Adrenal gland (tissue), 19 donors: ENCODE measurements at regions of chr4 and their contacts with region 1.

Region 1: DNA sequence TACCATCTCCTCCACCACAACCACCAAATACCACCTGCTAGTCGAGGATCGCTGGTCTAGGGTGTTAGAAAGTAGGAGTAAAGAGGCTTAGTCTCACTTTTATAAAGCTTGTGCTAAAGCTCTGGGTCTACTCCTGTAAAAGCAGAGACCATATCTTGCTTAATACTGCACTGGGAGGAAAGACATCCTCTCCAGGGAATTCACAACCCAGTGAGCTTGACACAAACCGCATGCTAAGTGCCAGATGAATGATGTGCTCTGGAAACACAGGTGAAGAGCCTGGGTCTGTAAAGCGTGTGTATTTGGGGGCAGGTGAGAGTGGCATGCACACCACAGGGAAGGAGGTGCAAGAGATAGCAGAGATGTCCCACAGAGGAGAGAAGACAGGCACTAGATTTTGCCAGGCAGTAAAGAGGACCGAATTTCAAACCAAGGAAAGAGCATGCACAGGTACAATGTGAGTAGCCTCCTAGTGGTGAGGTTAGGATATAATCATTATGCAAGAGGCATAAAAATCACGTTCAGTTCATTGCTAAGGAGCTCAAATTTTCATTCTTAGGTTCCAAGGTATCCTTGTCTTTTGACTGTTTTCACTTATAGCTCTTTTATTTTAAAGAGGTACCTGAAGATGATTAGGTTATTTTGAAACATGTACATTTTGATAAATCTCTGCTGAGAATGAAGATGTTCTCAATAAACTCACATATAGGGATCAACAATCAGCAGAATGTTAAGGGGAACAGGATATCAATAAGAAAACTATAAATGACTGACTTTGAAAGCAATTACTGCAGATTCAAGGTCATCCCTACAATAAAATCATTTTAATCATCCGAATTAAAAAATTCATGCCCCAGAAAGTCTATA is 20.7 kb downstream of the TAPT1 start:
- DNase-seq: no peak
- H3K4me3 ChIP-seq: no peak overlapping the region
- H3K27ac ChIP-seq: no peak overlapping the region
- H3K4me1 ChIP-seq: peaks cover 12 to 49% of the 10 kb centered on the region in 2 donors
- H3K27me3 ChIP-seq: no peaks in the 10 kb centered on the region
- CTCF ChIP-seq: peak; percentile 41 to 66 (median 53)
- POLR2A ChIP-seq: no peak

Region 2: GRCh38 chr4:15982842-15983524 is 222.5 kb before region 1 on chr4:
- intact Hi-C with region 1: no loop called
- DNase-seq: no peak
- H3K4me3 ChIP-seq: no peak overlapping the region
- H3K27ac ChIP-seq: no peak overlapping the region
- H3K4me1 ChIP-seq: no peaks in the 10 kb centered on the region
- H3K27me3 ChIP-seq: no peaks in the 10 kb centered on the region
- CTCF ChIP-seq: no peak
- POLR2A ChIP-seq: no peak

Region 3: DNA sequence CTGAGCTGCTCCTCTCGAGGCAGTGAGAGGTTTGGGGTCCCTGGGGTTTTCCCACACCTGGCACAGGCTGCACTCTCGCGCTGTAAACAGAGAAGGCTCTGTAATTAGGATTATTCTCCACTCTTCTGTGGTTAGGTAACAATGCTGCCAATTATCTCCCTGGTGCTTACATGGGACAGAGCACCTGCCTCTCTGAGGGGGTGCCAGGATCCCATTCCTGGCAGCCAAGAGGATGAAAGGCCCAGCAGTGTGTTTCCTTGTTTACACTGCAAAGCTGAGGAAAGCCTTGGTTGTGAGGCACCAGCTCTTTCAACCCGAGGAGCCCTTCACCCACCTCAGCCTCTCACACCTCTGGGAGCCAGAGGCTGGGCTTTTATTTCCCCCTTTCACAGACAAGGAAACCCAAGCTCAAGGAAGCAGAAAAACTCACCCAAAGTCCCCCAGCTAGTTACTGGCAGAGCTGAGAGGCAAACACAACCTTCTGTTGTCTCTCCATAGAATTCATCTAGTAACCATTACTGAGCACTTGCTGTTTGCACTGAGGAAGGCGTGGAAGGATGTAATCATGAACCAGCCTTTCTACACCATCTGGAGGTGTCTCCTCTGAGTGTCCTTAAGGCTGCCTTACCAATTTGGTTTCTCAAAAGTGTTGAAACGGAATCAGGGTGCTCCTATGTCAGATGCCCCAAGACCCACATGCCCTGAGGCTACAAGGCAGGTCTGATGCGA is 82.0 kb before region 1 on chr4:
- intact Hi-C with region 1: no loop called
- DNase-seq: no peak
- H3K4me3 ChIP-seq: no peak overlapping the region
- H3K27ac ChIP-seq: no peak overlapping the region
- H3K4me1 ChIP-seq: no peaks in the 10 kb centered on the region
- H3K27me3 ChIP-seq: no peaks in the 10 kb centered on the region
- CTCF ChIP-seq: no peak
- POLR2A ChIP-seq: no peak

Region 4: GRCh38 chr4:16150716-16151115 is 54.8 kb before region 1 on chr4:
- intact Hi-C with region 1: no loop called
- DNase-seq: no peak
- H3K4me3 ChIP-seq: no peak overlapping the region
- H3K27ac ChIP-seq: no peak overlapping the region
- H3K4me1 ChIP-seq: no peaks in the 10 kb centered on the region
- H3K27me3 ChIP-seq: no peaks in the 10 kb centered on the region
- CTCF ChIP-seq: no peak
- POLR2A ChIP-seq: no peak

Region 5: GRCh38 chr4:16264798-16265197 is 59.3 kb after region 1 on chr4:
- intact Hi-C with region 1: loop called in 1 of 2 experiments (anchors 10 kb)
- DNase-seq: peak in 1 of 7 donors; percentile 12
- H3K4me3 ChIP-seq: no peak overlapping the region
- H3K27ac ChIP-seq: no peak overlapping the region
- H3K4me1 ChIP-seq: peaks cover 0 to 4% of the 10 kb centered on the region in 2 donors
- H3K27me3 ChIP-seq: no peaks in the 10 kb centered on the region
- CTCF ChIP-seq: peak; percentile 32 to 83 (median 72)
- POLR2A ChIP-seq: no peak

Region 6: GRCh38 chr4:16431866-16432265 is 226.3 kb after region 1 on chr4:
- intact Hi-C with region 1: no loop called
- DNase-seq: no peak
- H3K4me3 ChIP-seq: no peak overlapping the region
- H3K27ac ChIP-seq: no peak overlapping the region
- H3K4me1 ChIP-seq: no peaks in the 10 kb centered on the region
- H3K27me3 ChIP-seq: no peaks in the 10 kb centered on the region
- CTCF ChIP-seq: no peak
- POLR2A ChIP-seq: no peak